Motor neuron (in vitro differentiated cells): ENCODE measurements at regions of chr11 and their contacts with region 1.

Region 1: DNA sequence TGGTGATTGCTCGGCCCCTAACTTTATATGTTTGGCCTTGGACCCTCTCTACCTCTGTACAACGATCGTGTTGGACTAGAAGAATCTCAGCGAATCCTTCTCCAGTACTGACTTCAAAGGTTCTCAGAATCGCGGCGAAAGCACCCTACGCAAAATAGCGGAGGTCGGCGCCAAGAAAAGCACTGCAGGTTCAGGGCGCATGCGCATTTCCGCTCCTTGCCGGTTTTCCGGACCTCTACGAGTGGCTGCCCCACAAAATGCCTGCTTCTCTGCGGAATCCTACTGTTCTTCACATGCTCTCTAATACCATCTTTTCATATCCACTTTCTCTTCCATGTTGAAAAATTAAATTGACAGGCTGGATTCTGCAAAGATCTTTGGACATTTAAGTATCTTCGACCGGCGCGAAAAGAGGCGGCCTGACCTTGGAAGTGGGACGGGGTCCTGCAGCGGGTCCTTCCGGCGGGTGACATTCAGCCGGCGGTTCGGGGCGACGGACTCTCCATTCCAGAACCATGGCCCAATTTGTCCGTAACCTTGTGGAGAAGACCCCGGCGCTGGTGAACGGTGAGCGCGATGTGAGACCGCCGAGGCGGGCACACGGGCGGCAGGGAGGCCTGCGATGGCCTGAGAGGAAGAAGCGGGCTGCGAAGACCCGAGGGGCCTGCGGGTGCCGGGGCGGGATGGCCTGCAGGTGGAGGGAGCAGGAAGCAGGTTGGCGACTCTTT is at the start of gene ATP5MG:
- ATAC-seq: peak; percentile 75 to 91 (median 88)
- H3K4me3 ChIP-seq: peak within 1 kb of the TSS; percentile 65 to 98 (median 91)
- H3K27ac ChIP-seq: peak within 1 kb of the TSS; percentile 96 to 98
- H3K4me1 ChIP-seq: peaks cover 15 to 19% of the 10 kb centered on the region in 2 donors
- total RNA-seq, gene ATP5MG: 145 to 207 (median 182) TPM

Region 2: DNA sequence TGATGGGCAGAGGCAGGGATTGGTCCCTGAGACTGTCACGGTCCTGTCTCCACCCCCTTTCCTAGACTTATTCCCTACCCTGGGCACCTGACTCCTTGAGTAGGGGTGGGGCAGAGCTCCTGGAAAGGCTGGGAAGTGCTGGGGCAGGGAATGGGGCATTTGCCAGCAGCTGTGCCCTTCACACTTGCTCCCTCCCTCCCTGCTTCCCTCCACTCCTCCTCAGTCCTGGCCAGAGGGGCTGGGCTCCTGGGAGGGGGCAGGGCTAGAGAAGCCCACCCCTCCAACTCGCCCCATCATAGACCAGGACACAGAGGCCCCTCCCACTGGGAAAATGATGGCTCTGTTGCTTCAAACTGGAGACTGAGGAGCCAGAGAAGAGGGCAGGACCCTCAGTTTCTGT is 236.4 kb before region 1 on chr11:
- in situ Hi-C with region 1: no loop called
- ATAC-seq: no peak
- H3K4me3 ChIP-seq: no peak overlapping the region
- H3K27ac ChIP-seq: no peak overlapping the region
- H3K4me1 ChIP-seq: no peaks in the 10 kb centered on the region

Region 3: DNA sequence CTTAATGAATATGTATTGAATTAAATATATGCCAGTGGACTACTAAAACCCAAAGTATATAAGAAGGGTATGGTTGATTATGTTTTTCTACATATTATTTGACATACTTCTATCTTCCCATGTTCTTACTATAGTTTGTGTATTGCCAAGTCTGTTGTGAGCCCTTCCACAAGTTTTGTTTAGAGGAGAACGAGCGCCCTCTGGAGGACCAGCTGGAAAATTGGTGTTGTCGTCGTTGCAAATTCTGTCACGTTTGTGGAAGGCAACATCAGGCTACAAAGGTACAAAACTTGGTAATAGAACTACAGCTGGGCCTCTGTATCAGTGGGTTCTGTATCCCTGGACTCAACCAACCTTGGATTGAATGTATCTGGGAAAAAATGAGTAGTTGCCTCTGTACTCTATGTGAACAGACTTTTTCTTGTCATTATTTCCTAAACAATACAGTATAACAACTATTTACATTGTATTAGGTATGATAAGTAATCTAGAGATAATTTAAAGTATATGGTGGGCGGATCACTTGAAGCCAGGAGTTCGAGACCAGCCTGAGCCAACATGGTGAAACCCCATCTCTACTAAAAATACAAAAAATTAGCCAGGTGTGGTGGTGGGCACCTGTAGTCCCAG is 87.3 kb after region 1 on chr11:
- in situ Hi-C with region 1: loop called in 8 of 9 experiments (anchors 10 to 25 kb)
- ATAC-seq: peak in 6 of 8 experiments; percentile 26 to 77 (median 48)
- H3K4me3 ChIP-seq: no peak overlapping the region
- H3K27ac ChIP-seq: no peak overlapping the region
- H3K4me1 ChIP-seq: no peaks in the 10 kb centered on the region

Region 4: DNA sequence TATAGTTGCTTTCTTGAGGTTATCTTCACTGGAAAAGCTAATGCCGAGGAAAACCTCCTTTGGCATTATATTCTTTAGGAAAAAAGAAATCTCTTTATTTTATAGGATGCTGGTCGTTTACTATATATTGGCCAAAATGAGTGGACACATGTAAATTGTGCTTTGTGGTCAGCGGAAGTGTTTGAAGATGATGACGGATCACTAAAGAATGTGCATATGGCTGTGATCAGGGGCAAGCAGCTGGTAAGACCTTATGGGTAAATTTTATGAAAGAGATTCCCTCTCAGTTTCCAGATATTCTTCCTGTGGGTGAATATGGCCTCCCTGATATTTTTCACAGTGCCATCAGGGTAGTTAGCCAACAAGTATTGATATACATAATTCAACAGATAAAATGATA is 96.5 kb after region 1 on chr11:
- in situ Hi-C with region 1: loop called in 8 of 9 experiments (anchors 10 to 25 kb)
- ATAC-seq: peak in 2 of 8 experiments; percentile 54 to 62
- H3K4me3 ChIP-seq: no peak overlapping the region
- H3K27ac ChIP-seq: no peak overlapping the region
- H3K4me1 ChIP-seq: no peaks in the 10 kb centered on the region